AG04450 (cell line): ENCODE measurements at regions of chrX and their contacts with region 1.

Region 1: DNA sequence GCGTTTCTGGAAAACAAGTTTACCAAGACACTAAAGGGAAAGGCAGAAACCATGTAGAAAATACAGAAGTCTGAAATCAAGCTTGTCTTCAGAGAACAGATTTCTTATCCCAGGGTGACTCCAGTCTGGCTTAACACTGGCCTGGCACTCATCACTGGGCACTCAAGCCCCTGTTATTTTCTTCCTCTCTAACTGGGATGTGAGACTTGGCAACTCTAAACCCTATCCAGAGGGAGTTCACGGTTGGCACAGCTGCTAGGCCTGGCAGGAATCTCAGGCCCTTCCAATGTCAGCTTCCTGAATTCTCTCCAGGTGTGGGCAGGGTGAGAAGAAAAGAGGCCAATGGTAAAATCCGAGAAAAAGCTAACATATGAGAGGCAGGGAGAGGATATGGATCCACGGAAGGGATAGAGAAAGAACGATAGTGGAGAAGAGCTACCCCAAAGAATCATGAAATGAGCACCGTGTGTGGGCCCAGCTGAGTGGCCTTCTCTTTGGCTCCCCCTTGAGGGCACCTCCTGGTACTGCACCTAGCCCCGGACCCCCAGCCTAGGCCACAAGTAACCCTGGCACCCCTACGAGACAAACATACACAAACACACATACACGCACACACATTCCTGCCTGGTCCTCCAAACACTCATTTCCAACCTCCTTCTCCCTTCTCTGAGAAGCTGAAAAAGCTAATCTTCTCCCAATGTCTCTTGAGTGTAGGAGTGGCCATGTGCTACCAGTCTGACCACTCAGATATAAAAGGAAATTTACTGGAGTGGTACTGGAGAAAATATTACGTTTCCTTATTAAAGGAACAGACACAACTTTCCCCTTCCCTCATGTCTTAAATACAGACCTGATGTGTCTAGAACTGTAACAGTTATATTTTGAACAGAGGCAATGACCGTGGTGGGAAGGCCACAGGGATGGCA is 16.6 kb upstream of the PTCHD1 start:
- DNase-seq: no peak
- H3K4me3 ChIP-seq: no peak overlapping the region
- H3K27ac ChIP-seq: no peak overlapping the region
- H3K27me3 ChIP-seq: no peaks in the 10 kb centered on the region
- CTCF ChIP-seq: peak; percentile 73

Region 2: DNA sequence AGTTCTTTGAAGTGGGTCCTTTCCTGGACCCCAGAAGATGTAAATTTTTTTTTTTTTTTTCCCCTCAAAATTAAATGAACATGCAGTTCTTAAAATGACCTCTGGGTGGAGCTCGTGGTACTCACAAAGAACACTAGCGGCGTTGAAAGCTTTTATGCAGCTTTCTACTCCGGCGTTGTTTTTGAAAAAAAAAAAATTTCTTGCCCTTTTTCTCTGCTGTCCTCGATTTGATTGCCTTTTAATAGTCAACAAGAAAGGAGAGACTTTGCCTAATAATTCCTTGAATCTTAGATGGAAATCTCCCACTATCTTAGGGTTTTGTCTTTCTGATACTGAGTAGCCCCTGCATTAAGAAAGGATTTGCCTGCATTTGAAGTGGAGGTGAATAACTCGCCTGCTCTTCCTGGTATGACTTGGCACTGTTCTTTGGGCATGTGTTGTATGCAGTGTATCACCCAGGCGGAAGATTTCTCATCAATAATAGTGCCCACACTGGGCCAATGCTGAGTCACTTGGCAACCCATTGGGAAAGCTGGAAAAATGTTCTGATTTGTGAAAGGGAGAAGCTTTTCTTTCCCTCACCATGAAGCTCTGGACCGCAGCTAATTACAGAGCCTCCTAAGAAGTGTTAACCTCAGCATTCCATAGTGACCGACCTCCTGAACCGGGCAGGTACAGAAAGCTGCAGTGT is 1181.9 kb before region 1 on chrX:
- CTCF ChIA-PET with region 1: interaction called, 10 read pairs
- POLR2A ChIA-PET with region 1: no interaction called
- DNase-seq: no peak
- H3K4me3 ChIP-seq: no peak overlapping the region
- H3K27ac ChIP-seq: peak overlapping the region; percentile 71
- H3K27me3 ChIP-seq: no peaks in the 10 kb centered on the region
- CTCF ChIP-seq: peak; percentile 53

Region 3: DNA sequence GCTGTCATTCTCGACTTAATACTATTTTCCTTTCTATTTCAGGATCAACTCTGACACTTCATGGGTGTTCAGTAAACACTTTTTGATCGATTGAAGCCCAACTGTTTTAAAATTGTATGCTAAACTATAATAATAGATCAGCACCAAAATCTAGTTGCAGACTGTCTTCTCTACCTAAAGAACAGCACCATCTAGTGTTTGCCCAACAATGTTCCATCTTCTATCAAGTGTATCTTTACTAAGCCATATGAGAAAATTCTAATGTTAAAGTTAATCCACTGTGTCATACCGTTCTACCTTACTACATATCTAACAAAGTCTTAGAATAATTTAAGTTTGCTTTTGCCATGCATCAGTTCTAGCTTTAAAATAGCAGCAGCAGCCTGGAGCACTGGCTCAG is 236.2 kb after region 1 on chrX:
- CTCF ChIA-PET with region 1: no interaction called
- POLR2A ChIA-PET with region 1: no interaction called
- DNase-seq: peak; percentile 3
- H3K4me3 ChIP-seq: no peak overlapping the region
- H3K27ac ChIP-seq: no peak overlapping the region
- H3K27me3 ChIP-seq: no peaks in the 10 kb centered on the region
- CTCF ChIP-seq: peak; percentile 54